H1 (cell line): ENCODE measurements at regions of chr9 and their contacts with region 1.

Region 1: GRCh38 chr9:86434039-86434726 is 80.0 kb upstream of the TUT7 start:
- DNase-seq: no peak
- H3K4me3 ChIP-seq: no peak overlapping the region
- H3K27ac ChIP-seq: no peak overlapping the region
- H3K4me1 ChIP-seq: peaks cover 0 to 8% (median 2%) of the 10 kb centered on the region in 4 experiments; a peak in 3 of 7 replicates
- H3K27me3 ChIP-seq: no peaks in the 10 kb centered on the region
- CTCF ChIP-seq: peak in 2 of 3 experiments; percentile 56 to 78; a peak in 2 of 4 replicates
- EP300 ChIP-seq: no peak
- POLR2A ChIP-seq: no peak
- RAD21 ChIP-seq: peak; percentile 87 to 90

Region 2: GRCh38 chr9:86230858-86231257 is 203.3 kb before region 1 on chr9:
- CTCF ChIA-PET with region 1: no interaction called
- POLR2A ChIA-PET with region 1: no interaction called
- DNase-seq: no peak
- H3K4me3 ChIP-seq: no peak overlapping the region
- H3K27ac ChIP-seq: no peak overlapping the region
- H3K4me1 ChIP-seq: no peaks in the 10 kb centered on the region
- H3K27me3 ChIP-seq: no peaks in the 10 kb centered on the region
- CTCF ChIP-seq: no peak
- EP300 ChIP-seq: no peak
- POLR2A ChIP-seq: no peak
- RAD21 ChIP-seq: no peak

Region 3: DNA sequence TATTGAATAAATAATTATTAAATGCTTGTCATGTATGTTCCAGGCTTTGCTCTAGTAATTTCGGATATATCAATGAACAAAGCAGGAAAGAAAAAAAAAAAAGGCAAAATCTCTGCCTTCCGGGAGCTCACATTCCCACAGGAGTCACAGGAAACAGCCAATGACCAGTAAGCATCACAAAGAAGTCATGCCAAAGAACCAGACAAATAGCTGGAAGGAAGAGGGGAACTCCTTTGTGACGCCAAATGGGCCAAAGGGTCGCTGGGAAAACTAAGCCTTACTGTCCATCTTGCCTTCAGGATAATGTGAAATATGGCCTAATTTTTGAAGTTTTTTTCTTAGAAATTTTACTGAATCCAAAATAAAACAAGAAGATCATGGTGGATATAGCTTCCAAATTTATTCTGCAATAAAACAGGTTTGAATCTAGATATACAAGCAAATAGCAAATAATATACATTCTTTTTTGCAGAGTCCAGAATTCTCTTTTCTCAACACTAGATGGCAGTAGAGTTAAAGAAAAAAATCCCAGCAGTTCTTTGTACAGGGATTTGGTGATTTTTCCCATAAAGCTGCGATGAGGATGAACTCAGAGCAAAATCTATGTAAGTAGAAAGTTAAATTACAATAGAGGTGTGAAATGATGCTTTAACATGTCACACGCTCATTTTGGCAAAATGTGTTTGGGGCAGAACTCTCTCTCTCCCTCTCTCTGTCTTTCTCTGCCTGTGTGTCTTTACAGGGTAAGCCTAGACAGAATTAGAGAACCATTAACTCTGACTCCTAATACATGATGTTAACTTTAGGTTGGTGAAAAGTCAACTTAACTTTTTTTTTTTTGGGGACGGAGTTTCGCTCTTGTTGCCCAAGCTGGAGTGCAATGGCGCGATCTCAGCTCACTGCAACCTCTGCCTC is 20.0 kb before region 1 on chr9:
- CTCF ChIA-PET with region 1: interaction called, 25 read pairs
- POLR2A ChIA-PET with region 1: no interaction called
- DNase-seq: no peak
- H3K4me3 ChIP-seq: no peak overlapping the region
- H3K27ac ChIP-seq: no peak overlapping the region
- H3K4me1 ChIP-seq: no peaks in the 10 kb centered on the region
- H3K27me3 ChIP-seq: peaks cover 18 to 36% (median 32%) of the 10 kb centered on the region in 4 experiments
- CTCF ChIP-seq: peak in 2 of 3 experiments; percentile 33 to 36; a peak in 2 of 4 replicates
- EP300 ChIP-seq: no peak
- POLR2A ChIP-seq: no peak
- RAD21 ChIP-seq: peak; percentile 61 to 64

Region 4: DNA sequence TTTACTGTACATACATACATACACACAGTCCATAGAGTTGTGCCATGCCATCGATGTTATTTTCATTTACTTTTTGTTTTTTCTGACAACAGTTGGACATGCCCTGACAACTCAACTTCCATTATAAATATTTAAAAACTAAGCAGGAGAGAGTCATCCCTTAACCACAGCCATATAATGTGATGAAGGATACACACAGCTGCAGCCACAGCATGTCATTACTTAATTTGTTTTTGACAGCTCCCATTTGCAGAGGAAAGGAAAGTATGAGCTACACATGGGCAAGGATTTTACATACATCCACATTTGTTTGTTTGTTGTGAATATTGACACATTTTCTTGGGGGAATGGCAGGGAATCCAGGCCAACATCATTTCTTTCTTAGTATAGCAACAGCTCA is 11.5 kb after region 1 on chr9:
- CTCF ChIA-PET with region 1: interaction called, 19 read pairs
- POLR2A ChIA-PET with region 1: no interaction called
- DNase-seq: no peak
- H3K4me3 ChIP-seq: no peak overlapping the region
- H3K27ac ChIP-seq: no peak overlapping the region
- H3K4me1 ChIP-seq: peaks cover 0 to 3% (median 0%) of the 10 kb centered on the region in 4 experiments; a peak in 1 of 7 replicates
- H3K27me3 ChIP-seq: no peaks in the 10 kb centered on the region
- CTCF ChIP-seq: no peak
- EP300 ChIP-seq: no peak
- POLR2A ChIP-seq: no peak
- RAD21 ChIP-seq: no peak

Region 5: DNA sequence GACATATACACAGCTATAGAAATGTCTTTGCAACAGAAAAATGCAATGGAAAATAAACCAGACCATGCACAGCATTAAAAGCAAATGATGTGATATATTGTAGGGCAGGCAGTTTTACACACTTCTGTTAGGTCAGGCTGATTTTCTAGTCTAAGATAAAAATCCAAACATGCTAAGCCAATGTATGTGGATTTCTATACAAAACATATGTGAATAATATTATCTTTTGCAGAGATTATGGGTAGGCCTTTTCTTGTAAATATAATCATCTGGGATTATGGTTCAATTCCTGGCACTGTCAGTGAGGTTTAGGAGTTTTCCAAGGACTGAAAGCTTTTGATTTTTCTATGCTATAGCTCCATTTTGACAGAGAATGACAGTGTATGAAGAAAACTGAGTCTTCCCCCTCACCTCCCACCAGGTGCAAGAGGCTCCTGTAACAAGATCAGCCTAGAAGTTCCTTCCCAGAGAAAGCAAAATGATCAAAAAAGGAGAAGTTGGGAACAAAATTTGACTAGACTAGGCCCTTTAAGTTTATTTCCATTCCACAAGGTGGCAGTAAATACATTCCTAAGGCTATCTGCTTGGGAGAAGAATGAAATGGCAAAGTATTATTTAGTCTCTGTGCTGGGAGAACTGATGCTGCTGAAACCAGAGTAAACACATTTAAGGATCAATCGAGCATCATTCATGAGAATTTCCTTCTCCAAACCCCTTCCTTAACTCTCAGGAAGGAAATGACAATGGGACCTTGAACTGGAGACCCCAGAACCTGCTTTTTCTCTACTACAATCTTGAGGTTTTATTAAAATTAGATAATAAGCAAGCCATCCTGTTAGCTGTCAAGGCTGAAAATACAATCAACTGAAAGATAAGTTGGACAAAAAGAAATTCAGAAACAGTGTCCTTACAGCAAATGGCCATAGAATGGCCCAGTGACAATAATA is 53.0 kb after region 1 on chr9:
- CTCF ChIA-PET with region 1: interaction called, 66 read pairs
- POLR2A ChIA-PET with region 1: no interaction called
- DNase-seq: no peak
- H3K4me3 ChIP-seq: no peak overlapping the region
- H3K27ac ChIP-seq: no peak overlapping the region
- H3K4me1 ChIP-seq: no peaks in the 10 kb centered on the region
- H3K27me3 ChIP-seq: no peaks in the 10 kb centered on the region
- CTCF ChIP-seq: peak in 2 of 3 experiments; percentile 49 to 58; a peak in 2 of 4 replicates
- EP300 ChIP-seq: no peak
- POLR2A ChIP-seq: no peak
- RAD21 ChIP-seq: peak; percentile 86 to 88

Region 6: DNA sequence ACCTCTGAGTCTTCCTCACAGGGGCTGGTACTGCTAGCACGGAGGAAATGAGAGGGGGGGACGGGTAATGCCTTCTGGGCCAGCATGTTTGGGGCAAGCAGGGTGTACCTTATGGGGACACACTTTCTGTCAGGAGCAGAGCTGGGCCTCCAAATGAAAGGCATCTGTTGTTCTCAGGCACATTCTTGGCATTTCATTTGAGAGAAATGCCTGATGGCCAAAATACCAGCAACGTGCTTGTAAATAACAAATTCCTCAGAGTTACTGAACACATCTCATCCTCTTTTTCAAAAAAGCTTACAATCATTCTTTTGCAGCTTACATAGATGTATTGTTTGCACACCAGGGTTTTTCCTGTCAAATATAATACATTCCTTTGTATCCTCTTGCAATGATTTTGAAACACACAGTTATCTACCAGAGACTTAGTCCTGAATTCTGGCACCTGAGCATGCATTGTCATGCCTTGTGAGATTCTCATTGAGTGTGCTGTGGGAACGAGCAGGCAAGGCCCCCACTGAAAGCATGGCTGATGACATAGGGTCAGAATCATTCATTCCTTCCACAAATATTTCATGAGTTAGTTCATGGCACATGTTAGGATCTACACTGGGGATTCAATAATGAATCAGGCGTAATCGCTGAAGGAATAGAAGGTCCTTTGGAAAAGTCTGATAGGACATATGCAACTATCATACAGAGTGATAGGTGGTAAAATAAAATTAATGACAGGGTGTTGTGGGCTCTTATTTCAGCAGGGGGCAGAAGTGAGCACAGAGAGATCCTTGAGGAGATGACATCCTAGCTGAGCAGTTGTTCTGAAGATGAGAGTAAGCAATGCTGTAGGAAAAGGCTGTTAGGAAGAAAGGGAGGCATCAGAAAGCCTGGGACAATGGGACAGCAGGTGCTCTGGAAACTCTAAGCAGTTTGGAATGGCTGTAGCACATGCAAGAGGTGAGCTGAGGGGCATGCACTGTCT is 181.0 kb after region 1 on chr9:
- CTCF ChIA-PET with region 1: interaction called, 11 read pairs
- POLR2A ChIA-PET with region 1: no interaction called
- DNase-seq: peak in 1 of 2 experiments; percentile 58
- H3K4me3 ChIP-seq: no peak overlapping the region
- H3K27ac ChIP-seq: no peak overlapping the region
- H3K4me1 ChIP-seq: peaks cover 0 to 6% (median 2%) of the 10 kb centered on the region in 4 experiments; a peak in 4 of 7 replicates
- H3K27me3 ChIP-seq: peaks cover 0 to 3% (median 0%) of the 10 kb centered on the region in 4 experiments; a peak in 1 of 7 replicates
- CTCF ChIP-seq: peak in 2 of 3 experiments; percentile 52 to 67; a peak in 3 of 4 replicates
- EP300 ChIP-seq: no peak
- POLR2A ChIP-seq: no peak
- RAD21 ChIP-seq: peak; percentile 57 to 59